ENCODE measurements at regions of chr1 and their contacts with region 1.

Region 1: GRCh38 chr1:160264795-160265307 is 2.5 kb upstream of the DCAF8 start:
- DNase-seq: no peak
- H3K4me3 ChIP-seq: no peak overlapping the region
- H3K27ac ChIP-seq: no peak overlapping the region
- H3K4me1 ChIP-seq: peaks cover 14 to 16% of the 10 kb centered on the region in 2 donors
- H3K27me3 ChIP-seq: no peaks in the 10 kb centered on the region
- CTCF ChIP-seq: no peak
- POLR2A ChIP-seq: no peak

Region 2: GRCh38 chr1:160284782-160285344 is 20.0 kb after region 1 on chr1 and contains the start of gene PEX19:
- intact Hi-C with region 1: loop called (anchors 2 kb)
- DNase-seq: peak; percentile 94 to 95
- H3K4me3 ChIP-seq: peak within 1 kb of the TSS; percentile 26 to 96 (median 84)
- H3K27ac ChIP-seq: peak within 1 kb of the TSS; percentile 11 to 91 (median 90)
- H3K4me1 ChIP-seq: peaks cover 11 to 19% of the 10 kb centered on the region in 2 donors
- H3K27me3 ChIP-seq: no peaks in the 10 kb centered on the region
- CTCF ChIP-seq: no peak
- POLR2A ChIP-seq: peak in 1 of 2 donors; percentile 91
- total RNA-seq, gene PEX19: 65.2 to 120 (median 85.3) TPM

Region 3: DNA sequence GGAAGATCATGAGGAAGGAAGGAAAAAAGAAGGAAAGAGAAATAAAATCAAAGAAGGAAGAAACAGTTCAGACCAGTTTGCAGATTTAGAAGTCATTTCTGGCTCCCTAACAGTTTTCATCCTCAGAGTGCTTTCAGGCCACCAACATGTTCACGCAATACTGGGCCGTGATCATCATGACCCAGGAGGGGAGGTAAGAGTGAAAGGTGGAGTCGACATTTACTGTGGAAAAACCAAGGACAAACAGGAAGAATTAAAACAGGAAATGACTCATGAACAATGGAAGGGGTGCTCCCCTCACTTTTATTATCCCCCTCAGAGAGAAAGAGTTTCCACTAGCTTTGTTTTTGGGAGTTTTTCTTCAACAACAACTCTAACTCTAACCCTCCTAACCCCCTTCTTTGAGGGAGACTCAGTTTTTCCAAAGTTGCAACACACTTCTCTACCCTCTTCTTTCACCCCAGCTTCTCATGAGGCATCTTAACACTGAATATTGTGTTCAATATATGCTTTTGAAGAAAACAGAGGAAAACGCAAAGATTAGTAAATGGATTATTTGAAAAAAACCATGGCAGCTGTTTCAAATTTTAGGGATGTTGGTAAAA is 195.9 kb after region 1 on chr1:
- intact Hi-C with region 1: no loop called
- DNase-seq: no peak
- H3K4me3 ChIP-seq: no peak overlapping the region
- H3K27ac ChIP-seq: no peak overlapping the region
- H3K4me1 ChIP-seq: no peaks in the 10 kb centered on the region
- H3K27me3 ChIP-seq: no peaks in the 10 kb centered on the region
- CTCF ChIP-seq: no peak
- POLR2A ChIP-seq: no peak

Measured in thyroid gland (tissue), 4 donors.